ENCODE measurements at regions of chr19 and their contacts with region 1.

Region 1: GRCh38 chr19:18675779-18676178 is 7.7 kb upstream of the CRTC1 start:
- DNase-seq: no peak
- ATAC-seq: no peak
- H3K4me3 ChIP-seq: no peak overlapping the region
- H3K27ac ChIP-seq: no peak overlapping the region
- H3K4me1 ChIP-seq: peaks cover 48% of the 10 kb centered on the region
- H3K27me3 ChIP-seq: no peaks in the 10 kb centered on the region; a peak in 1 of 5 replicates
- CTCF ChIP-seq: peak; percentile 66
- EP300 ChIP-seq: no peak
- POLR2A ChIP-seq: no peak
- RAD21 ChIP-seq: peak; percentile 47; the same call in 1 of the 2 replicates

Region 2: DNA sequence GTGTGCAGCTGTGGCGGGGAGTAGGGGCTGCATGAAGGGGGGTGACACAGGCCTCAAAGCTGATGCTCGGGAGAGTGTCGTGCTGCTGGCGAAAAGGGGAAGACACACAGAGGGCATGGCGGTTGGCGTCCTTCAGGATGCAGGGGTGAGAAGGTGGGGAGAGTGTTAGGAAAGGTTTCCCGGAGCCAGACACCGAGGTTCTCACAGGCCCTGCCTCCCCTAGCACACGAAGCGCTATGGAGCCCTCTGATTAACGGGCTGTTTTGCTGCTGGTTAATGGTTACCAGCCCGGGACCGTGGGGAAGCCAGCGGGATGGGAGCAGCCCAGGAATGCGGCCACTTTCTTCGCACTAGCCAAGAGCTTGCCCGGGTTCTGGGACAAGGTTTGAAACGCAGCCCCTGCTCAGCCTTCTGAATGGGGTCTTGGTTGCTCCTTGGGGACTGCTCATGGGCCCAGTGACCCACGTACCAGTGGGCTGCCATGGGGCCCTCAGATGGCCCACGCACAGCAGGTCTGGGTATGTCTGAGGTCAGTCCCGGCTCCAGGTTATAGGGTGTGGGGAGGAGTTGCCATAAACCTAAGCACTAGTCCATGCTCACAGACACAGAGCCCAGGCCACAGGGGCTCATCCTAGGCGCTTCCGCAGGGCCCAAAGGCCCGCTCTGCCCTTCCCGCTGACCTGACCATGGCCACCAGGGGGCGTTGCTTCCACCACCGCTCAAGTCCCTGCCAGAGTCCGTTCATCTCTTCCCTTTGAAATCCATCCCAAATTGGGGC is 206.5 kb before region 1 on chr19:
- CTCF ChIA-PET with region 1: interaction called, 5 read pairs
- POLR2A ChIA-PET with region 1: no interaction called
- in situ Hi-C with region 1: loop called (anchors 10 kb)
- intact Hi-C with region 1: loop called (anchors 5 kb)
- DNase-seq: peak; percentile 85
- ATAC-seq: peak; percentile 87
- H3K4me3 ChIP-seq: peak overlapping the region; percentile 36 to 65 (median 38); a peak in 5 of 6 replicates
- H3K27ac ChIP-seq: peak overlapping the region; percentile 45
- H3K4me1 ChIP-seq: peaks cover 74% of the 10 kb centered on the region
- H3K27me3 ChIP-seq: no peaks in the 10 kb centered on the region
- CTCF ChIP-seq: peak; percentile 90
- EP300 ChIP-seq: no peak
- POLR2A ChIP-seq: no peak
- RAD21 ChIP-seq: peak; percentile 56

Region 3: GRCh38 chr19:18478569-18479311 is 197.0 kb before region 1 on chr19:
- CTCF ChIA-PET with region 1: no interaction called
- POLR2A ChIA-PET with region 1: interaction called, 3 read pairs
- in situ Hi-C with region 1: loop called (anchors 10 kb)
- intact Hi-C with region 1: no loop called
- DNase-seq: peak; percentile 88
- ATAC-seq: peak; percentile 73
- H3K4me3 ChIP-seq: peak overlapping the region in 2 of 3 experiments; percentile 9 to 45; a peak in 3 of 6 replicates
- H3K27ac ChIP-seq: peak overlapping the region; percentile 90
- H3K4me1 ChIP-seq: peaks cover 79% of the 10 kb centered on the region
- H3K27me3 ChIP-seq: no peaks in the 10 kb centered on the region
- CTCF ChIP-seq: 0 out of 2 replicates have a peak, but pooled peaks have one; percentile 21
- EP300 ChIP-seq: peak in 1 of 2 experiments; percentile 75; a peak in 2 of 4 replicates
- POLR2A ChIP-seq: peak in 1 of 2 experiments; percentile 31; a peak in 2 of 4 replicates
- RAD21 ChIP-seq: peak; percentile 8; the same call in 1 of the 2 replicates

Region 4: DNA sequence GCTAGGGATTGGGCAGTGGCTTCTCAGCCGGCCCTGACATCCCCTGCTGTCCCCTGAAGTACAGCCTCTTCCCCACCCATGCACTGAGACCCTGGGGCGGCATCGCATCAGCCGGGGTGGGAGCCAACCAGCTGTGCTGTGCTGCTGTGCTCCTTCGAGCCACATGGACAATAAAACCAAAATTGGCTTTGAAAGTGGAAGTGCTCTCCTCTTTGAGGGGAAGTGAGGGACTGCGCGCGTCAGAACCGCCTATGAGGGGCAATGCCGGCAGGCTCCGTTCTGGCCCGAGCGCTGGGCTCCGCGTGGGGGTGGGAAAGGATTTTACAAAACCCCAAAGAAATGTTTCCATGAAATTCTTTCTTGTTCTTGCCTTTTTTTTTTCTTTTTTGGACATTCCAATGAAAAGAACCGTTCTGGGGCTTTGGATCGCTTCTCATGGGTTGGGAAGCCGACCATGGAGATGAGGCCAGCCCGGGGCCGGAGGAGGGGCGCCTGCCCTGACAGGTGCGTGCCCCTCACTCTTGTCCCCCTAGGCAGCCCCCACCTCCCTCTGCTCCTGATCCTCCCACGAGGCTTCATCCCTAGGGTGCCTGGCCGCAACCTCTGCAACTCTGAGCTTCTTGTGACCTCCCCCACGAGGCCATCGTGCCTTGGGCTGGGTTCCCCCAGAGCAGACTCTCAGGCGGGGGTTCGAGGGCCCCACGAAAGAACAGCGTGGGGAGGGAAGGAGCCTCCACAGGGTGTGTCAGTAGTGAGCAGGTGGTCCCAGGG is 16.3 kb before region 1 on chr19:
- CTCF ChIA-PET with region 1: no interaction called
- POLR2A ChIA-PET with region 1: no interaction called
- in situ Hi-C with region 1: no loop called
- intact Hi-C with region 1: no loop called
- DNase-seq: no peak
- ATAC-seq: no peak
- H3K4me3 ChIP-seq: no peak overlapping the region
- H3K27ac ChIP-seq: no peak overlapping the region
- H3K4me1 ChIP-seq: peaks cover 10% of the 10 kb centered on the region
- H3K27me3 ChIP-seq: no peaks in the 10 kb centered on the region
- CTCF ChIP-seq: no peak
- EP300 ChIP-seq: no peak
- POLR2A ChIP-seq: no peak
- RAD21 ChIP-seq: no peak